Mammary epithelial cell (primary cell): ENCODE measurements at regions of chr20 and their contacts with region 1.

Region 1: GRCh38 chr20:3543901-3544507 is 73.2 kb downstream of the ATRN start:
- DNase-seq: peak; percentile 99
- H3K4me3 ChIP-seq: no peak overlapping the region
- H3K27ac ChIP-seq: peak overlapping the region; percentile 94
- H3K4me1 ChIP-seq: peaks cover 49% of the 10 kb centered on the region
- H3K27me3 ChIP-seq: no peaks in the 10 kb centered on the region
- CTCF ChIP-seq: no peak

Region 2: GRCh38 chr20:3407771-3408637 is 136.0 kb before region 1 on chr20:
- CTCF ChIA-PET with region 1: no interaction called
- dilution Hi-C with region 1: no loop called
- in situ Hi-C with region 1: no loop called
- intact Hi-C with region 1: loop called (anchors 1 kb)
- DNase-seq: peak; percentile 90
- H3K4me3 ChIP-seq: peak overlapping the region; percentile 70 to 87 (median 72)
- H3K27ac ChIP-seq: peak overlapping the region; percentile 52
- H3K4me1 ChIP-seq: peaks cover 18% of the 10 kb centered on the region
- H3K27me3 ChIP-seq: no peaks in the 10 kb centered on the region
- CTCF ChIP-seq: no peak

Region 3: GRCh38 chr20:4041748-4042411 is 497.9 kb after region 1 on chr20:
- CTCF ChIA-PET with region 1: no interaction called
- dilution Hi-C with region 1: no loop called
- in situ Hi-C with region 1: no loop called
- intact Hi-C with region 1: no loop called
- DNase-seq: peak; percentile 98
- H3K4me3 ChIP-seq: no peak overlapping the region
- H3K27ac ChIP-seq: no peak overlapping the region
- H3K4me1 ChIP-seq: peaks cover 47% of the 10 kb centered on the region
- H3K27me3 ChIP-seq: no peaks in the 10 kb centered on the region
- CTCF ChIP-seq: no peak